ENCODE measurements at regions of chr19 and their contacts with region 1.

Region 1: GRCh38 chr19:13093407-13094105 is 9.1 kb downstream of the LYL1 start:
- DNase-seq: peak; percentile 86
- H3K4me3 ChIP-seq: no peak overlapping the region
- H3K27ac ChIP-seq: no peak overlapping the region
- H3K4me1 ChIP-seq: peaks cover 32% of the 10 kb centered on the region
- H3K27me3 ChIP-seq: no peaks in the 10 kb centered on the region
- CTCF ChIP-seq: peak; percentile 87 to 90
- POLR2A ChIP-seq: no peak

Region 2: GRCh38 chr19:12965017-12965811 is 128.3 kb before region 1 on chr19:
- CTCF ChIA-PET with region 1: interaction called, 91 read pairs
- POLR2A ChIA-PET with region 1: interaction called, 4 read pairs
- dilution Hi-C with region 1: no loop called
- intact Hi-C with region 1: loop called (anchors 1 kb)
- DNase-seq: peak; percentile 74
- H3K4me3 ChIP-seq: peak overlapping the region; percentile 1 to 48 (median 45)
- H3K27ac ChIP-seq: peak overlapping the region; percentile 4
- H3K4me1 ChIP-seq: peaks cover 2% of the 10 kb centered on the region
- H3K27me3 ChIP-seq: no peaks in the 10 kb centered on the region
- CTCF ChIP-seq: peak; percentile 77 to 99
- POLR2A ChIP-seq: no peak

Region 3: GRCh38 chr19:13007292-13008045 is 86.1 kb before region 1 on chr19:
- CTCF ChIA-PET with region 1: interaction called, 11 read pairs
- POLR2A ChIA-PET with region 1: no interaction called
- dilution Hi-C with region 1: no loop called
- intact Hi-C with region 1: no loop called
- DNase-seq: no peak
- H3K4me3 ChIP-seq: no peak overlapping the region
- H3K27ac ChIP-seq: no peak overlapping the region
- H3K4me1 ChIP-seq: no peaks in the 10 kb centered on the region
- H3K27me3 ChIP-seq: peaks cover 0 to 9% of the 10 kb centered on the region in 2 experiments
- CTCF ChIP-seq: no peak
- POLR2A ChIP-seq: no peak

Region 4: DNA sequence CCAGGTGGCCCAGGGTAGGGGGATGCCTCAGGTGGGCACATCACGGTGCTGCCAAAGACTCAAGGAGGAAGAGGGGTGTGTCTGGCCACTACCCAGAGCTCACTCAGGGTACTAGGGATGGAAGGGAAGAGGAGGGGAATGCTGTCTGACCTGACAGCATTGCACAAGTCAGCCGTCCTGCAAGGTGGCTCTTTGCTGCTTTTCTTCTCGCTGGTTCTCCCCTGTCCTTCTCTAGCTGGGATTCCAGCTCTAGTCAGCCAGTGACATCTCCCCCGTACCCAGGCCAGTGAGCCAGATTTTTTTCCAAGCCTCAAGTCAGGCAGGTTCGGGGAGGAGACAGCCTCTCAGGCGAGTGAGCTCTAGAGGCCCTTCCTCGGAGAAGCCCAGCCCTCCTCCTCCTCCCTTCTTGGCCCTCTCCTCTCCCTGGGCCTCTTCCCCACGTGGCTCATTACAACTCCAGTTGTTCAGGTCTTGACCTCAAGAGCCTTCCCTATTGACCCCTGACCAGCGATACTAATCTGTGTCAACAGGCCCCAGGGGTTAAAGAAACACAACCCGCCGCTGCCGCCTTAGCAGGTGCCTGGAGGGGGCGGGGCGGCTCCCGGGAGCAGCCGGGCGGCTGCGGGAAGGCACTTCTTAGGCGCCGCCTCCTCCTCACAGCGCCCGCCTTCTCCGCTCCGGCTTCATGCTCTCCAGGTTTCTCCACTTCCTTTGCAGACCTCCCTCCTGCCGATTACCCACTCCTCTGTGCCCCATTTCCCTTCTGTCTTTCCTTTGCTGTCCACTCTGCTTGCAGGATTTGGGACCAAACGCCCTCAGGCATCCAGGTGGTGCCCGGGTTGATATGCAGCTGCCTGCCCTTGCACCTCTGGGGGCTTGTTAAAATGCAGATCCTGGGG is 42.0 kb before region 1 on chr19:
- CTCF ChIA-PET with region 1: interaction called, 16 read pairs
- POLR2A ChIA-PET with region 1: interaction called, 3 read pairs
- dilution Hi-C with region 1: no loop called
- intact Hi-C with region 1: loop called (anchors 5 kb)
- DNase-seq: peak; percentile 49
- H3K4me3 ChIP-seq: no peak overlapping the region
- H3K27ac ChIP-seq: no peak overlapping the region
- H3K4me1 ChIP-seq: peaks cover 51% of the 10 kb centered on the region
- H3K27me3 ChIP-seq: no peaks in the 10 kb centered on the region
- CTCF ChIP-seq: no peak
- POLR2A ChIP-seq: no peak

Region 5: DNA sequence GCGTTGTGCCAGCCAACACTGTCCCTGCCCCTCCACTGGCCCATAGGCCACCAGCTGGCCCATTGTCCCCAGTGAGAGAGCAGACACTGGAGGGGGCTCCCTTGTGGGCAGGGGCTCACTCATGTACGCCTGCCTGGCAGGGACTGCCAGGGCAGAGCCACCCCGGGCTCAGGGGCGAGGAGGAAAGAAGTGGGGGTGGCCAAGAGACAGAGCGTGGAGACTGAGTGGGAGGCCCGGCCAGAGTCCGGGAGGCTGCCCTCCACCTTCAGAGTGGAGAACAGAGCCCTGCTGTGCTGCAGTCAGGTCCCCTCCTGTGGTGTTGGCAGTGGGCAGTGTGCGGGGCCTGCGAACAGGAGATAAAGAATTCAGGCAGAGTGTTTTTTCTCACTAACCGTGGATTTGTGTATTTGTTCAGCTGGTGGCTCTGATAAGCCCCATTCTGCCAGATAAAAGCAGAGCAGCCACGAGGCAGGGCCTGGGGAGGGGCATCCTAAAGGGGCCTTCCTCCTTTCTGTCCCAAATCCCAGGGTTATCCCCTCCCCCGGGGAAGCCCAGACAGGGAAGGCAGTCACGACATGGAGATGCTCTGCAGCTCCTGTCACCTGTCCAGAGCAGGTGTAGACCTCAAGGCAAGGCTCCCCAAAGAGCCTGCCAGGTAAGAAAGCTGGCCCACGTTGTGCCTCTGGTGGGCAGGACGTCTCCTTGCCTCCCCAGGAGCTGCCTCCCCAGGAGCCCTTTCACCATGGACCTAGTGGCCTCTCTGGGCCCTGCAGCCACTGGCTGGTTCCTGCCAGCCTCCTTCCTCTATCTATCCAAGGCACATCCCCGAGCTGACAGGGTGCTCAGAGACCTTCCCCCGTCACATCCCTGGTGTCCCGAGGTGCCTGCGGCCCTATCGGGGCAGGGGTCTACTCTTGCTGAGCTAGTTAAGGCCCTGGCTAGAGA is 23.9 kb before region 1 on chr19:
- CTCF ChIA-PET with region 1: interaction called, 14 read pairs
- POLR2A ChIA-PET with region 1: no interaction called
- dilution Hi-C with region 1: no loop called
- intact Hi-C with region 1: no loop called
- DNase-seq: peak; percentile 41
- H3K4me3 ChIP-seq: no peak overlapping the region
- H3K27ac ChIP-seq: no peak overlapping the region
- H3K4me1 ChIP-seq: no peaks in the 10 kb centered on the region
- H3K27me3 ChIP-seq: no peaks in the 10 kb centered on the region
- CTCF ChIP-seq: peak in 1 of 2 donors; percentile 12
- POLR2A ChIP-seq: no peak

Region 6: DNA sequence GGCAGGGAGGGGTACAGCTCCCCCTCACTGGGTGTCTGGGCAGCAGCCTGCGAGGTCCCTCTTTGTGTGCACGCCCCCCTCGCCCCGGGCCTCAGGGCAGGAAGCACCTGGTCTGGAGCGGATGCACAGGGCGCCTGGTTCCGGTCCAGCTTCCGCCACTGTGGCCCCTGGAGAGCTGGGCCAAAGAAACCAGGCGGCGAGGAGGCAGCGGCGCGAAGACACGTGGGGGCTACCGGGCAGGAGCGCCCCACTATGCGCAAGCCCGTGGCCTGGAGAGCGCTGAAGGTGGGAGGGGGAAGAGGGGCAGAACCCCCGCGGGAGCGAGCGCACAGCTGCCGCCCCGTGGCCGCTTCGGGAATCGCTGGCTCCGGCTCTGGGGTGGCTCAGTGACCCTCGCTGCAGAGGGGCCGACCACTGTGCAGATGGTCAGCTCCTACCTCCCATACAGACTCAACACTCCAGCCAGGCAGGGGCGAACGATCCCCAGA is 10.8 kb after region 1 on chr19:
- CTCF ChIA-PET with region 1: interaction called, 23 read pairs
- POLR2A ChIA-PET with region 1: interaction called, 6 read pairs
- dilution Hi-C with region 1: no loop called
- intact Hi-C with region 1: no loop called
- DNase-seq: peak; percentile 94
- H3K4me3 ChIP-seq: no peak overlapping the region
- H3K27ac ChIP-seq: peak overlapping the region; percentile 60
- H3K4me1 ChIP-seq: peaks cover 41% of the 10 kb centered on the region
- H3K27me3 ChIP-seq: no peaks in the 10 kb centered on the region
- CTCF ChIP-seq: peak; percentile 85 to 95
- POLR2A ChIP-seq: peak; percentile 80

Measured in endothelial cell of umbilical vein (primary cell).